ENCODE measurements at regions of chr2 and their contacts with region 1.

Region 1: GRCh38 chr2:119290859-119291587 is 67.4 kb downstream of the STEAP3 start:
- DNase-seq: peak; percentile 90 to 92
- H3K4me3 ChIP-seq: no peak overlapping the region
- H3K4me3 Mint-ChIP-seq: no peak overlapping the region
- H3K27ac Mint-ChIP-seq: no peak overlapping the region
- H3K4me1 ChIP-seq: no peaks in the 10 kb centered on the region
- H3K4me1 Mint-ChIP-seq: no peaks in the 10 kb centered on the region
- H3K27me3 ChIP-seq: no peaks in the 10 kb centered on the region
- H3K27me3 Mint-ChIP-seq: no peaks in the 10 kb centered on the region
- CTCF ChIP-seq: peak; percentile 95 to 98

Region 2: DNA sequence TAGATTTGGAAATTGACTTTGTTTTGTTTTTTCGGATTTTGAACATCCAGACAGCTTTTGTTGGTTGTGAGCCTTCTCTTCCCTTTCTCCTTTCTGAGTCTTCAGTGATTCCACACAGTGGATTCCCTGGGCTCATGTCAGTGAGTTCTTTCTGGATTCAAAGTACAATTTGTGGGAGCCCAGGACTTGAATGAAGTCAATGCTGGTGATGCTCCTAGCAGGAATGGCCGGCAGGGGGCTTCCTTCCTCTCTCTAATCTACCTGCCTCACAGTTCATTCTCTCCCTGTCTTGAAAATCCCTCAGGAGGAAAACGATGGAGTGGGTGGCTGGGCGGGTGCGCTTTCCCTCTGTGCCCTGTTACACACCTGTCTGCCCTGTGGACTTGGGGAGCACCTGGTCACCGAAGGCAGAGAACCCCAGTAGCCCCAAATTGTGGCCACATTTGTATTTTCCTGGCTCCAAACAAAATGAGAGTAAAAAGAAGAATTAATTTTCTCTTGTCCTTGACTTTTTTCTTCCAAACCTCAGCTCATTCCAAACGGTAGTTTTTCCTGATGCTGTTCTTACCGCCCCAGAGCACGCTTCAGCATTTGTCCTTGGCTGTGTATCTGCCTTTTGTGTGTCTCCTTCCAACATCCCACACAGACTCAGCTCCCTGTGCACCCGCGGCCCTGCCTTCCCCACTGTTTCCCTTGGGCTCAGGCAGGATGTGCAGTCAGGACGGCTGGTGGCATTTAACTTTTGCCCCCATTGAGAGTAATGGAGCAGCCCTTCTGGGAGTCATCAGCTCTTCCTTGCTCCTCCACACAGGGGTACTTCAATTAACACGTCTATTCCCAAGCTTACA is 262.5 kb before region 1 on chr2:
- CTCF ChIA-PET with region 1: interaction called, 3 read pairs
- POLR2A ChIA-PET with region 1: no interaction called
- intact Hi-C with region 1: loop called (anchors 1 kb)
- DNase-seq: peak; percentile 63 to 65
- H3K4me3 ChIP-seq: no peak overlapping the region
- H3K4me3 Mint-ChIP-seq: no peak overlapping the region
- H3K27ac Mint-ChIP-seq: no peak overlapping the region
- H3K4me1 ChIP-seq: no peaks in the 10 kb centered on the region
- H3K4me1 Mint-ChIP-seq: no peaks in the 10 kb centered on the region
- H3K27me3 ChIP-seq: no peaks in the 10 kb centered on the region; the same call in 1 of the 2 replicates
- H3K27me3 Mint-ChIP-seq: peaks cover 17% of the 10 kb centered on the region
- CTCF ChIP-seq: peak; percentile 71 to 78

Region 3: DNA sequence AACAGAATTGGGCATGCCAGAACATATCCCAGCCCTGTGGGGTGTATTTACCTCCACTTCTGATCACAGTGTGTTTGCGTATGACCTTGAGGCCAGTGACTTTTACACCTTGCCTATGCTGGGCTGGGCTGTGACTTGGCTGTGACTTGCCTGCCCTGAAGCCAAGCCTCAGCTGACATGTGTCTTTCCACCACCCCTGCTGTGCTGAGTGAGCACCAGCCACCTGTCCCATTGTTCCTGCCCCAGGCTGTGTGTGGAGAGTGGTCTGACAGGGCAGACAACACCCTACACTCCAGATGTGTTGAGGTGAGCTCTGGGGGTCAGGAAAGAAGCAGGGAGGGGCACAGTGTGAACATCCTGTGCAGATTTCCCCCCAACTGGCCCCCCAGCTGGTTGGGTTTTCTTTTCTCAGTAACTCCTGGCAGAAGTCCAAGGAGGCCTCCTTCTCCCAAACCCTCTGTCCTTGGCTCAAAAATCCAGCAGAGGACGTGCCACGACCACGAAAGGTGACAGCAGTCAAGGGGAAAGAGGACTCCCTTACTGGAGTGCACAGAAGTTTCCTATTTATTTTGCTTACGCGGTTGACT is 72.5 kb before region 1 on chr2:
- CTCF ChIA-PET with region 1: interaction called, 4 read pairs
- POLR2A ChIA-PET with region 1: no interaction called
- intact Hi-C with region 1: loop called (anchors 1 kb)
- DNase-seq: no peak
- H3K4me3 ChIP-seq: no peak overlapping the region
- H3K4me3 Mint-ChIP-seq: no peak overlapping the region
- H3K27ac Mint-ChIP-seq: no peak overlapping the region
- H3K4me1 ChIP-seq: peaks cover 8% of the 10 kb centered on the region; the same call in 1 of the 2 replicates
- H3K4me1 Mint-ChIP-seq: no peaks in the 10 kb centered on the region
- H3K27me3 ChIP-seq: no peaks in the 10 kb centered on the region
- H3K27me3 Mint-ChIP-seq: no peaks in the 10 kb centered on the region
- CTCF ChIP-seq: peak in 1 of 2 experiments; percentile 54

Region 4: GRCh38 chr2:119264781-119265692 is 26.0 kb before region 1 on chr2:
- CTCF ChIA-PET with region 1: no interaction called
- POLR2A ChIA-PET with region 1: no interaction called
- intact Hi-C with region 1: loop called (anchors 2 kb)
- DNase-seq: peak; percentile 64 to 77
- H3K4me3 ChIP-seq: no peak overlapping the region
- H3K4me3 Mint-ChIP-seq: no peak overlapping the region
- H3K27ac Mint-ChIP-seq: no peak overlapping the region
- H3K4me1 ChIP-seq: no peaks in the 10 kb centered on the region
- H3K4me1 Mint-ChIP-seq: peaks cover 9% of the 10 kb centered on the region
- H3K27me3 ChIP-seq: no peaks in the 10 kb centered on the region
- H3K27me3 Mint-ChIP-seq: no peaks in the 10 kb centered on the region
- CTCF ChIP-seq: peak; percentile 92 to 93